Dendritic cell treated with granulocyte-macrophage colony-stimulating factor and Interleukin-4, amounts not matched to agents 40 ng/mL and 50 ng/mL, for 4 days (primary cell): ENCODE measurements at regions of chr3 and their contacts with region 1.

Region 1: DNA sequence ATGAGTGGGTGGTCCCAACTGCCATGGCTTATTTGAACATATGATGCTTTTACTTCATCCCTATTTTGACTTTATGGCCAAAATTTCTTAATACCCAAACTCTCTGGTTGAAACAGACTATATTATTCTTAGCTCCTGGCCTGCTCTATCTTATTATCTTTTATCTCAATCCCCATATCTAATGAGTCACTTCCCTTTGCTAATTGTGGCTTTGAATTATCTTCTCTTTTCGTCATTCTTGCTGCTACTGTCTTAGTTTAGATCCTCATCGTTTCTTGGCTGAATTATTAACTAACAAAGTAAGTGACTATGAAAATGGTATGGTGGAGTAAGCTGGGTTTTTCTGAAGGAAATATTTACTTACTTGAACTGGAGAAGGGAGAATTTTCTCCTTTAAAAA is 28.2 kb upstream of the DNAJC19 start:
- H3K4me3 Mint-ChIP-seq: no peak overlapping the region
- H3K27ac Mint-ChIP-seq: no peak overlapping the region
- H3K4me1 Mint-ChIP-seq: no peaks in the 10 kb centered on the region
- H3K27me3 Mint-ChIP-seq: no peaks in the 10 kb centered on the region

Region 2: DNA sequence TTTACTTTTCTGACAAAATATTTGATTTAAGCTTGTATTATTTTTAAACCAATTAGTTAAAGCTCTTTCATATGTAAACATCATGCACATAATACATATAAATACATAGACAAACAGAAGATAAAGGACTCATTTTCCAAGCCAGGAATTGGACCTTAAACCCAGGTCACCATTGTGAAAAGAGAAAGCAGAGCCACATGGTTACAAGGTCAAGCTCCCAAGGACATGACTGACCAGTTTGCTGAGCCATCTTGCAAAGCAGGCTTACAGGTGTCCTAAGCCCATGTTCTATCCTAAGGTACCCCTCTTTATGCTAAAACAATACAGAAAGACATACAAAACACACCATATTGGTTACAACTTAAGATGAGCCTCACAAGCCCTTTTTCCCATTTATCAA is 22.3 kb after region 1 on chr3:
- intact Hi-C with region 1: loop called (anchors 1 kb)
- H3K4me3 Mint-ChIP-seq: no peak overlapping the region
- H3K27ac Mint-ChIP-seq: no peak overlapping the region
- H3K4me1 Mint-ChIP-seq: no peaks in the 10 kb centered on the region
- H3K27me3 Mint-ChIP-seq: no peaks in the 10 kb centered on the region